ENCODE measurements at regions of chr1 and their contacts with region 1.

Region 1: DNA sequence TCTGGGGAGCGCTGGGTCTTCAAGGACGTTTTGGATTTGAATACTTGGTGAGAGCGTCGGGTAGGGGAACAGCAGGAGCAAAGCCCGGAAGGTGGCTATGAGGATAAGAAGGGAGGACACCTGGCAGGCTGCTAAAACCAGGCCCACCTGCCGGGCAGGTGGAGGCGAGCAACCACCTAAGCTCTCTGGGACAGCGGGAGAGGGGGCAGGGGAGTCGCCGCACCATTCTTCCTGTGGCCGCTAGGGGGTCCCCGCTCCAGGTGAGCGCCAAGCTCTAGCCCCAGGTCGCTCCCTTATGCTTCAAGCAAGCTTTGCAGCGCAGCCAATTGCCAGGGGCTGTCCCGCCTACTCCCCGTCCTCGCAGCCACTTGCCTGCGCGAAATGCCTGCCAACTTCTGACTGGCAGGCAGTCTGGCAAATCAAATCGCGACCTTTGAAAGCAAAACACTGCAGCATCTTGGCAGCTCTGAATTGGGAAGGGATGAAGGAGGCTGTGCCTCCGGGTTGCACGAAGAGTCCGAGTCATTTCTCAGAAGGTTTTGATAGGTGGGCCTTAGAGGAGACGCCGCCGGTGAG is at the start of gene NIPAL3:
- DNase-seq: peak; percentile 96
- H3K4me3 Mint-ChIP-seq: peak within 1 kb of the TSS; percentile 98
- H3K27ac Mint-ChIP-seq: peak within 1 kb of the TSS; percentile 74
- H3K4me1 Mint-ChIP-seq: peaks cover 37% of the 10 kb centered on the region
- H3K27me3 Mint-ChIP-seq: no peaks in the 10 kb centered on the region
- CTCF ChIP-seq: peak; percentile 83
- total RNA-seq, gene NIPAL3: 28.8 and 30.8 TPM in 2 replicates

Region 2: GRCh38 chr1:24502709-24503058 is 87.3 kb after region 1 on chr1 and contains the start of gene RCAN3:
- CTCF ChIA-PET with region 1: interaction called, 3 read pairs
- intact Hi-C with region 1: loop called (anchors 10 kb)
- DNase-seq: peak; percentile 87
- H3K4me3 Mint-ChIP-seq: peak within 1 kb of the TSS; percentile 79
- H3K27ac Mint-ChIP-seq: peak within 1 kb of the TSS; percentile 80
- H3K4me1 Mint-ChIP-seq: peaks cover 26% of the 10 kb centered on the region
- H3K27me3 Mint-ChIP-seq: no peaks in the 10 kb centered on the region
- CTCF ChIP-seq: no peak
- total RNA-seq, gene RCAN3: 12.9 and 15.3 TPM in 2 replicates

Region 3: DNA sequence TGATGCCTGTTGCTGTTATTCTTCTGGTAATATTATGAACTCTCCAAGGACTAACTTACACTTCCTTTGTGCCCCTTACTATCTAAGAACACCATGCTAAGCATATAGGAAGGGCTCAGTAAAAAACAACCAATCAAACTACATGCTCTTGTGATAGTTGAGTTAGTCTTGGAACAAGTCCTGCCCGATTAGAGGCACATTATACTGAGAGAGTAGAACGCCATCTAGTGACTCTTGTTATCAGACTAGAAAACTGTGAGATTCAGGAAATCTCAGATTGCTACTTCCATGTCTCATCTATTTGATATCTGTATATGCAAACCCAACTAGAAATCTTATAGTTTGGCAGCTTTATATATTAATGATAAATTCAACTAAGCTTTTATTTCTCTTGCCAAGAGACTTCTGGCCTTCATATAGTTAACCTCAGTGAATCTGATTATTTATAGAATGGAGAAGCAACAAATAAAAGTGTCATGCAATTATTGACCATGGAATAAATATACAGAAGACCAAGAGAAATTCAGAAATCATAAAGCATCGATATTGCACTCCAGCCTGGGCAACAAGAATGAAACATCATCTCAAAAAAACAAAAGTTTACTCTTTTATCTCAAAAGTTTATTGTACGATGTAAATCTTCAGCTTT is 219.9 kb after region 1 on chr1:
- CTCF ChIA-PET with region 1: interaction called, 3 read pairs
- intact Hi-C with region 1: loop called (anchors 10 kb)
- DNase-seq: no peak
- H3K4me3 Mint-ChIP-seq: no peak overlapping the region
- H3K27ac Mint-ChIP-seq: no peak overlapping the region
- H3K4me1 Mint-ChIP-seq: peaks cover 12% of the 10 kb centered on the region
- H3K27me3 Mint-ChIP-seq: no peaks in the 10 kb centered on the region
- CTCF ChIP-seq: no peak

Measured in Calu3 (cell line).